Left lung (tissue), 14 donors: ENCODE measurements at regions of chr5 and their contacts with region 1.

Region 1: GRCh38 chr5:153974131-153974812 is 64.4 kb downstream of the FAM114A2 start:
- DNase-seq: peak in 2 of 4 donors; percentile 22 to 53
- ATAC-seq: peak; percentile 73
- H3K4me3 ChIP-seq: no peak overlapping the region
- H3K27ac ChIP-seq: no peak overlapping the region
- H3K4me1 ChIP-seq: peaks cover 0 to 4% of the 10 kb centered on the region in 2 donors
- H3K27me3 ChIP-seq: peaks cover 0 to 5% of the 10 kb centered on the region in 2 donors
- CTCF ChIP-seq: peak; percentile 59 to 74

Region 2: DNA sequence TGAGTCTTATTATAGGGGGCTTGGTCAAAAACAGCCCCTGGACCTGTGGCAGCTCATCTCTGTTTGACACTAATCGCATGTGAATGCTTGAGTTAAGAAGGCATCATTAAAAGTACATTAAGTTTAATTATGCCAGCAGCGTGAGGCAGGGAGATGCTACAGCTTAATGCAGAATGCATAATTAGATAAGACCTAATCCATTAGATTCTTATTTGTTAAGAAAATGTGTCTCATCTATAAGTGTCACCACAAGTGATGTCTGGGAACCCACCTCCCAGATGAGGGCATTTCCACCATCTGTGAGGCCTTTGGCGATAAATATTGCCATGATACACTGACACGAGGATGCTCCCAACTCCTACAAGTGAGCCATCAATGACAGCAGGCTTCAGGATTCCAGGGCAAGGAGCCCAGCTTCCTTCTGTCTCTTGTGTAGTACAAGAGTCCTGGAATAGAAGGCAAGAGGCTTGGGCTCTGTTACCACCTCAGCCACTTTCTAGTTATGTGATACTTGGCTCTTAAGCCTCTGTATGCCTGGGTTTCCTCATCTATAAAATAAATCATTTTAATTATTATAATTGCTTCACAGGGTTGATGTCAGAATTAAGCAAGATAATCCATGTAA is 138.3 kb before region 1 on chr5:
- intact Hi-C with region 1: no loop called
- DNase-seq: no peak
- ATAC-seq: no peak
- H3K4me3 ChIP-seq: no peak overlapping the region
- H3K27ac ChIP-seq: no peak overlapping the region
- H3K4me1 ChIP-seq: no peaks in the 10 kb centered on the region
- H3K27me3 ChIP-seq: no peaks in the 10 kb centered on the region
- CTCF ChIP-seq: no peak

Region 3: GRCh38 chr5:154189819-154190594 is 215.7 kb after region 1 on chr5:
- intact Hi-C with region 1: loop called in 1 of 2 experiments (anchors 10 kb)
- DNase-seq: peak; percentile 76 to 96 (median 84)
- ATAC-seq: peak; percentile 97
- H3K4me3 ChIP-seq: peak overlapping the region; percentile 84 to 97
- H3K27ac ChIP-seq: peak overlapping the region; percentile 70 to 84
- H3K4me1 ChIP-seq: peaks cover 19 to 32% of the 10 kb centered on the region in 2 donors
- H3K27me3 ChIP-seq: peaks cover 0 to 11% of the 10 kb centered on the region in 2 donors
- CTCF ChIP-seq: peak in 1 of 2 donors; percentile 35

Region 4: GRCh38 chr5:154276973-154277331 is 302.7 kb after region 1 on chr5:
- intact Hi-C with region 1: no loop called
- DNase-seq: peak in 3 of 4 donors; percentile 45 to 74 (median 58)
- ATAC-seq: peak; percentile 68
- H3K4me3 ChIP-seq: no peak overlapping the region
- H3K27ac ChIP-seq: peak overlapping the region in 1 of 2 donors; percentile 31
- H3K4me1 ChIP-seq: peaks cover 3 to 27% of the 10 kb centered on the region in 2 donors
- H3K27me3 ChIP-seq: no peaks in the 10 kb centered on the region
- CTCF ChIP-seq: no peak